CD14-positive monocyte (primary cell): ENCODE measurements at regions of chr22 and their contacts with region 1.

Region 1: GRCh38 chr22:37244114-37244921 is at the start of gene RAC2:
- DNase-seq: peak; percentile 87 to 92 (median 89)
- H3K4me3 ChIP-seq: peak within 1 kb of the TSS; percentile 77 to 99 (median 96)
- H3K4me3 Mint-ChIP-seq: peak within 1 kb of the TSS; percentile 92 to 95
- H3K27ac ChIP-seq: peak within 1 kb of the TSS; percentile 96 to 98
- H3K27ac Mint-ChIP-seq: peak within 1 kb of the TSS; percentile 95 to 99 (median 97)
- H3K4me1 ChIP-seq: peaks cover 63 to 65% of the 10 kb centered on the region in 2 donors
- H3K4me1 Mint-ChIP-seq: peaks cover 62% of the 10 kb centered on the region
- H3K27me3 ChIP-seq: no peaks in the 10 kb centered on the region
- H3K27me3 Mint-ChIP-seq: peaks cover 0 to 3% (median 2%) of the 10 kb centered on the region in 3 donors
- CTCF ChIP-seq: no peak
- polyA plus RNA-seq, gene RAC2: 360 to 529 (median 526) TPM

Region 2: DNA sequence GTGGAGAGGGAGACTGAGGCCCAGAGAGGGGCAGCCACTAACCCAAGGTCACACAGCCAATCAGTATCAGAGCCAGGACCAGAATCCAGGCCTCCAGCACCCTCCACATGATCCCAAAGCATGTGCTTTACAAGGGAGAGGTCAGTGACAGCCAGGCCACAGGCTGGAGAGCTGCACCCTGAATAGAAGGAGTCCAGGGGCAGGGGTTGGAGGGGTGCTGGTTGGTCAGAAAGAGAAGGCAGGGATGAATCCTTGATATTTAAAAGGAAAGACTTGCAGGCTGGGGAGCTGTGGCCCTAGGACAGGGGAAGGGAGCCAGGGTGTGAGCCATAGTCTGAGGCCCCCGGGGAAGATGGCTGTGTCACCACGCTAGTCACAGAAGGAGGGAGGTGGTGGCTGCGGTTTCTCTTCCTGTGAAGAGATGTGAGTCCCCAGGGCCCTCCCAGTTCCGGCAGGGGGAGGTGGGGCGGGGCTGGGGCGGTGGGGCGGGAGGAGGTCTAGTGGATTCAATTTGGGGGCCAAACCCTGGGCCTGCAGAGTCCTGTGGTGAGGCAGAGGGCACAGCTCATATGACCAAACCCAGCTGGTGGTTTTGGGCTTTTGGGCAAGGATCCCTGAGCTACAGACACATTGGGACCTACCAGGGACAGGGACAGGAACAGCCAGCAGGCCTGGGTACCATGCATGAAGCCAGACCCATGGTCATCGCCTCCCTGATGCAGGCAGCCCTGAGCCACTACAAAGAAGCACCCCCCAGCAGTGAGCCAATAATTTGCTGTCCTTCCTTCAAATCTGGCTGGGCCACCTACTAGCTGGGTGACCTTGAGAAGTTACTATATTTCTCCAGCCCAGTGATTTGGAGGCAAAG is 14.3 kb before region 1 on chr22:
- intact Hi-C with region 1: loop called in 1 of 2 experiments (anchors 1 kb)
- DNase-seq: peak; percentile 91 to 94 (median 94)
- H3K4me3 ChIP-seq: peak overlapping the region in 1 of 3 experiments; percentile 52
- H3K4me3 Mint-ChIP-seq: peak overlapping the region; percentile 55 to 80
- H3K27ac ChIP-seq: peak overlapping the region; percentile 90 to 100
- H3K27ac Mint-ChIP-seq: peak overlapping the region; percentile 96 to 99 (median 97)
- H3K4me1 ChIP-seq: peaks cover 72 to 91% of the 10 kb centered on the region in 2 donors
- H3K4me1 Mint-ChIP-seq: peaks cover 86% of the 10 kb centered on the region
- H3K27me3 ChIP-seq: no peaks in the 10 kb centered on the region
- H3K27me3 Mint-ChIP-seq: peaks cover 0 to 3% (median 0%) of the 10 kb centered on the region in 3 donors
- CTCF ChIP-seq: no peak

Region 3: DNA sequence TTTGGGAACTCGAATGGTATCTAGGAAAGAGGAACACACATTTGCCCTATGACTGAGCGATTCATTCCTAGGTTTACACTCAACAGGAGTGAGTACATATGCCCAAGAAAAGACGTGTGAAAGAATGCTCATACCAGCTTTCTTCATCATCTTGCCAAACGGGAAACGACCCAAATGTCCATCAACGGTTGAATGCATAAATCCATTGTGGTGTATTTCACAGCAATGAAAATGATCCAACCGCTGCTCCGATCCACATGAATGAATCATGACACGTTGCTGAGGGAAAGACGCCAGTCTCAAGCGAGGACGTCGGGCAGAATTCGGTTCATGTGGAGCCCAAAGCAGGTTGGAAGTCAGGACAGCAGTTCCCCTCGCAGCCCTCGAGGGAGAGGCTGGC is 109.5 kb after region 1 on chr22:
- intact Hi-C with region 1: no loop called
- DNase-seq: no peak
- H3K4me3 ChIP-seq: no peak overlapping the region
- H3K4me3 Mint-ChIP-seq: no peak overlapping the region
- H3K27ac ChIP-seq: no peak overlapping the region
- H3K27ac Mint-ChIP-seq: no peak overlapping the region
- H3K4me1 ChIP-seq: no peaks in the 10 kb centered on the region
- H3K4me1 Mint-ChIP-seq: peaks cover 4% of the 10 kb centered on the region
- H3K27me3 ChIP-seq: no peaks in the 10 kb centered on the region
- H3K27me3 Mint-ChIP-seq: peaks cover 3 to 12% (median 6%) of the 10 kb centered on the region in 3 donors
- CTCF ChIP-seq: no peak